Panc1 (cell line): ENCODE measurements at regions of chr4 and their contacts with region 1.

Region 1: GRCh38 chr4:128823025-128823661 is 13.6 kb downstream of the JADE1 start:
- DNase-seq: peak; percentile 57
- ATAC-seq: peak; percentile 75
- H3K4me3 ChIP-seq: no peak overlapping the region
- H3K27ac ChIP-seq: no peak overlapping the region
- H3K4me1 ChIP-seq: peaks cover 12% of the 10 kb centered on the region
- H3K27me3 ChIP-seq: no peaks in the 10 kb centered on the region
- CTCF ChIP-seq: no peak

Region 2: GRCh38 chr4:128358231-128358912 is 464.8 kb before region 1 on chr4:
- CTCF ChIA-PET with region 1: interaction called, 12 read pairs
- POLR2A ChIA-PET with region 1: no interaction called
- in situ Hi-C with region 1: no loop called
- intact Hi-C with region 1: no loop called
- DNase-seq: no peak
- ATAC-seq: no peak
- H3K4me3 ChIP-seq: no peak overlapping the region
- H3K27ac ChIP-seq: no peak overlapping the region
- H3K4me1 ChIP-seq: peaks cover 7% of the 10 kb centered on the region
- H3K27me3 ChIP-seq: no peaks in the 10 kb centered on the region
- CTCF ChIP-seq: no peak

Region 3: GRCh38 chr4:128590773-128591172 is 232.4 kb before region 1 on chr4:
- CTCF ChIA-PET with region 1: no interaction called
- POLR2A ChIA-PET with region 1: no interaction called
- in situ Hi-C with region 1: no loop called
- intact Hi-C with region 1: no loop called
- DNase-seq: no peak
- ATAC-seq: no peak
- H3K4me3 ChIP-seq: no peak overlapping the region
- H3K27ac ChIP-seq: no peak overlapping the region
- H3K4me1 ChIP-seq: no peaks in the 10 kb centered on the region
- H3K27me3 ChIP-seq: no peaks in the 10 kb centered on the region
- CTCF ChIP-seq: no peak

Region 4: DNA sequence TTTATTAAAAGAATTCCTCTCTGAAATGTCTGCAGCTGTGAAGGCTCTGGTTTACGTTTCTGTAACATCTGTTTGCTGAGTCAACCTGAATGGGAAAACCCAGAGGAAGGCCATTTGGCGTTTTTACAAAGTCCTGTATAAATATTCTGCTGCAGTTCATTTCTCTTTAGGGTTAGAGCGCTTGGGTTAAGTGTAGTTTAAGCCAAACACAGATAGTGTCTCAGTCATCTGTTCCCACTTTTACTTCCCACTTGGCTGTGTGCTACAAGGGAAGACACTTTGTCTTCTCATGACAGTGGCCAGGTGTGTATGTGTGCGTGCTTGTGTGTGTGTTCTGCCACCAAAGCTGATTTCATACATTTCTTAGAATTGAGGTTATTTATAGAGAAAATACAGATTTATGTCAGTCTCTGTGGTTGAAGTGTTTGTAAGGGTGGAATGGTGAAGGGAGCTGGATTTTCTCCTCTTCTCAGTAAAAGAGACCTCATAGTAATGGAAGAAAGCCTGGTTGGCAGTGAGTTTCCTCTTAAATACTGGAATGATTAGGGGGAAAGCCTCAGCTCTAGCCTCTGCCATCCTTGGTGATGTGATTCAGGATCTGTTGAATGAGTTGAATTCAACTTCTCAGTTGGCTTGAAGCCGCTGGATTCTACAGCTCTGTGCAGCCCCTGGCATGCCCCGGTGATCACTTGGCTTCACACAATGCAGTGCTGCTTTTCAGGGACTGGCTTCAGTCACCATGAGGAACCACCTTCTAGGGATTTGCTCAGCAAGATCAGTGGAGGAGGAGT is 36.9 kb after region 1 on chr4:
- CTCF ChIA-PET with region 1: no interaction called
- POLR2A ChIA-PET with region 1: no interaction called
- in situ Hi-C with region 1: no loop called
- intact Hi-C with region 1: no loop called
- DNase-seq: no peak
- ATAC-seq: no peak
- H3K4me3 ChIP-seq: no peak overlapping the region
- H3K27ac ChIP-seq: no peak overlapping the region
- H3K4me1 ChIP-seq: no peaks in the 10 kb centered on the region
- H3K27me3 ChIP-seq: no peaks in the 10 kb centered on the region
- CTCF ChIP-seq: no peak